Heart left ventricle (tissue), 16 donors: ENCODE measurements at regions of chr1 and their contacts with region 1.

Region 1: DNA sequence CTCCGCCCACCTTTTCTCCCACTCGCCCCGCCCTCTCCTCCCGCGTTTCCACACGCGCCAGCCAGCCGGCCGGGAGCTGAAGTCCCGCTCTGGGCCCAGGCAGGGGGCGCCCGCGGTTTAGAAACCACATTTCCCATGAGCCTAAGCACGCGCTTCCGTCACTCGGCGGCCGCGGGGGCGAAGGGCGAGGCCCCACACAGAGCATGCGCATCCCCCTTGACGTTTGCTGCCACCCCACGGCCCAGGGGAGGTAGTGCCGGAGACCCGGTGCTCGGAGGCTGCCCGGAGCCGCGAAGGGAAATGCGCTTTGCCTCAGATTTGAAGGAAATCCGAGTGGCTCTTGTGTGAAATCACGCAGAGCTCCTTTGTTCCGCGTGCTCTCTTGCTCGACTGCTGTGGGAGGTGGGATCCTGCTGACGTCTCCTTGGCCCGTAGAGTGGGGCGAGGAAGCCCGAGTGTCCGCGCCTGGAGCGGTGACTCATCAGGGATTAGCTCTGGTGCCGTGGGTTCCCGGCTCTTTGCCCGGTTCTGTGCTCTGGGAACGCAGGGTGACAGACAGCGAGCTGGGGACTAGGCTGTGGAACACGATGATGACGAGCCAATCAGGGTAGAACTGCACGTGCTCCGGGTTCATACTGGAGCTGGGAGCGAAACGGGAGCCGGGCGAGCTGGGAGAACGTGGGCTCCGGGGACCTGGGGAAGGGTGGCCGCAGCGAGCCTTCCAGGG is 407 bp upstream of the B3GALNT2 start:
- DNase-seq: peak; percentile 99 to 100 (median 99)
- ATAC-seq: peak; percentile 94 to 96 (median 94)
- H3K4me3 ChIP-seq: peak overlapping the region; percentile 58 to 96 (median 83)
- H3K27ac ChIP-seq: peak overlapping the region; percentile 92 to 99 (median 98)
- H3K4me1 ChIP-seq: peaks cover 0 to 32% (median 16%) of the 10 kb centered on the region in 12 donors
- H3K27me3 ChIP-seq: no peaks in the 10 kb centered on the region
- CTCF ChIP-seq: peak; percentile 80 to 100 (median 92)
- POLR2A ChIP-seq: peak; percentile 6 to 61

Region 2: GRCh38 chr1:234963180-234963903 is 541.3 kb before region 1 on chr1:
- intact Hi-C with region 1: loop called in 1 of 10 experiments (anchors 10 kb)
- DNase-seq: peak; percentile 81 to 91 (median 86)
- ATAC-seq: peak; percentile 48 to 78 (median 68)
- H3K4me3 ChIP-seq: peak overlapping the region in 3 of 12 donors; percentile 5 to 32 (median 23)
- H3K27ac ChIP-seq: peak overlapping the region; percentile 24 to 99 (median 72)
- H3K4me1 ChIP-seq: peaks cover 9 to 74% (median 45%) of the 10 kb centered on the region in 12 donors
- H3K27me3 ChIP-seq: no peaks in the 10 kb centered on the region
- CTCF ChIP-seq: no peak
- POLR2A ChIP-seq: no peak

Region 3: DNA sequence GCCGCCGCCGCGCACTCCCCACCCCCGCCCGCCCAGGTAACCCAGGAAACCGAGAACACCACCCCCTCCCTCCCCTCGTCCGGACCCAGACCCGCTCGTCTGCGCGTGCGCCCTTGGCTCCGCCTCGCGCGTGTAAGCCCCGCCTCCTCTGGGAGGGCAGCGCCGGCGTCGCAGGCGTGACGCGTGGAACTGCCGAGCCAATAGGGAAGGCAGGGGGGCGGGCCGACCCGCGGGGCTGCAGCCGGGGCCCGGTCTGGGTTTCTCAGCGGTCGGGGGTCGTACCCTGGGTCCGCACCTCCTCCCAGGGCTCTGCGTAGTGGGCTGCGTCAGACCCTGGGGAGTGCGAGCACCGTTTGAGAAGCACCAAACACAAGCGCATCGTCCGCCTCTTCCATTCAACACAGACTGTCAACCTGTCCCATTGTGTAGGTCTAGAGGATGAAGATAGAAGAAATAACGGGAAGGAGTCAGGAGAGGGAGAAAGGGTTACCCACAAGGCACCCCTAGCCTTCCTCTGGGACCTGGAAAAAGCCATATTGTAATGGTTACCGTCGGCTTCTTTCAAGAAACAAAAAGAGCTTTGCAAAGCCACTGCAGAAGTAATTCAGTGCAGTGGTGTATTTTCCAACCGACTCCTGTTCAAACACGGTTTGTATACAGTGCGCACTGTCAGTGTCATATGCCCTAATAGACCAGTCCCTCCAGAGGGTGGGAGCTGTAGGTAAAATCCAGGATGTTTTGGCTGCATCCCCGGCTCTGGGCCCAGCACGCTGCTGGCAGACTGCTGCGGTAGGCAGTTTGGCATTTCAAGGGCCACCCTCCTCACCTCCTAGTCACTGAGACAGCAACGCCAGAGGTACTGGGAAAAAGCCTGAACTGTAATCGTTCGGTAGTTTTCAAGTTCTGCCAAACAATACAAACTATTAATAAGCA is 362.5 kb after region 1 on chr1:
- intact Hi-C with region 1: loop called in 2 of 10 experiments (anchors 10 kb)
- DNase-seq: peak; percentile 95 to 99 (median 96)
- ATAC-seq: peak; percentile 94 to 99 (median 98)
- H3K4me3 ChIP-seq: peak overlapping the region; percentile 76 to 99 (median 93)
- H3K27ac ChIP-seq: peak overlapping the region; percentile 83 to 98 (median 94)
- H3K4me1 ChIP-seq: peaks cover 0 to 47% (median 22%) of the 10 kb centered on the region in 12 donors
- H3K27me3 ChIP-seq: no peaks in the 10 kb centered on the region
- CTCF ChIP-seq: no peak
- POLR2A ChIP-seq: peak; percentile 20 to 90